Left cardiac atrium (tissue), 4 donors: ENCODE measurements at regions of chr4 and their contacts with region 1.

Region 1: DNA sequence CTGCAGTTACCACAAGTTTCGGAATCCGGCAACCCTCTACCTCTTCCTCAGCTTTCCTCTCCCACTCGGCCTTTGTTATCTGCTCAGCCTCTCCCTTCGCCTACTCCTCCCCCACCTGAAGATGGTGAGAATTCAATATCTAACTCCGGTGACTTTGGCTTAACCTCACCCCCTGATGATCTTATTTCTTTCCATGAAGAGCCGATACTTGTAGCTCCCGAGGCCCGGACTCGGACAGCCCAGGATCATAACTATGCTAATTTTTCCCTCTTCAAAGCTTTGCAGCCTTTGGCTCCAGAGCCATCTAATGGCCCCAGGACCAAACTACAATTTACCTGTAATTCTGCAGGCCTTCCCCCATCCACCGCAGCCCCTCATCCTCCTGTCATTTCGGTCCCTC is 32.0 kb upstream of the MGST2 start:
- DNase-seq: no peak
- ATAC-seq: peak; percentile 90

Region 2: GRCh38 chr4:139416073-139416673 is 217.5 kb before region 1 on chr4:
- intact Hi-C with region 1: loop called in 1 of 2 experiments (anchors 10 kb)
- DNase-seq: no peak
- ATAC-seq: no peak

Region 3: DNA sequence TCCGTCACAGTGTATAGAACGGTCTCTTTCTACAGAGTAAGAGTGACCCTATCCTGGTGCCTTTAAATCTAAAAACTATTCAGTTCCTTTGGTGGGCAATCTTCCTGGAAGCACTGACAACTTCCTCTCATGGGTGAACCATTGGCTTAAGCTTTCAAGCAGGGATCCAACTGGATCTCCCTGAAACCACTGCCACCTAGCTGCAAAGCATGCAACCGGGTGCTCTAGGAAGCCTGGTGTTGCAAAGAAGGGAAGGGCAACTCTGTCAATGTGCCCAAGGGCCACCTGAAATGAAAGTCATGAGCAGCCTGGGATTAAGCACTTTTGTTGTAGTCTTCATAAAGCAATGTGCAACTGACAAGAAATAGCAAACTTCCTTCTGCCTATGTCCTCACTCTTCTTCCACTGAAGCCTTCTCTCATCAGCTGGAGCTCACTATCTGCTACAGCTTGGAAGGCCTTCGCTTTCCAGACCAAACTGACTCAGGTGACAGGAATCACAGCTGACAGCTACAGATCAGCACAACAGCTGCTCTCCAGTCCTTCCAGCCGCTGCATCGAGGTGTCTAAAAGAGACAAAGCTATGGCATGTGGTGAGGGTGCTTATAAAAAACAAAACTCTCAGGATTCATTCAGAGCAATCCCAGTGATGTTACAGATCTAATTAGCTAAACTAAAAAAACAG is 123.8 kb before region 1 on chr4:
- intact Hi-C with region 1: loop called in 1 of 2 experiments (anchors 10 kb)
- DNase-seq: no peak
- ATAC-seq: peak; percentile 64 to 66

Region 4: GRCh38 chr4:139593091-139593564 is 40.5 kb before region 1 on chr4:
- intact Hi-C with region 1: no loop called
- DNase-seq: no peak
- ATAC-seq: peak in 1 of 2 donors; percentile 45

Region 5: DNA sequence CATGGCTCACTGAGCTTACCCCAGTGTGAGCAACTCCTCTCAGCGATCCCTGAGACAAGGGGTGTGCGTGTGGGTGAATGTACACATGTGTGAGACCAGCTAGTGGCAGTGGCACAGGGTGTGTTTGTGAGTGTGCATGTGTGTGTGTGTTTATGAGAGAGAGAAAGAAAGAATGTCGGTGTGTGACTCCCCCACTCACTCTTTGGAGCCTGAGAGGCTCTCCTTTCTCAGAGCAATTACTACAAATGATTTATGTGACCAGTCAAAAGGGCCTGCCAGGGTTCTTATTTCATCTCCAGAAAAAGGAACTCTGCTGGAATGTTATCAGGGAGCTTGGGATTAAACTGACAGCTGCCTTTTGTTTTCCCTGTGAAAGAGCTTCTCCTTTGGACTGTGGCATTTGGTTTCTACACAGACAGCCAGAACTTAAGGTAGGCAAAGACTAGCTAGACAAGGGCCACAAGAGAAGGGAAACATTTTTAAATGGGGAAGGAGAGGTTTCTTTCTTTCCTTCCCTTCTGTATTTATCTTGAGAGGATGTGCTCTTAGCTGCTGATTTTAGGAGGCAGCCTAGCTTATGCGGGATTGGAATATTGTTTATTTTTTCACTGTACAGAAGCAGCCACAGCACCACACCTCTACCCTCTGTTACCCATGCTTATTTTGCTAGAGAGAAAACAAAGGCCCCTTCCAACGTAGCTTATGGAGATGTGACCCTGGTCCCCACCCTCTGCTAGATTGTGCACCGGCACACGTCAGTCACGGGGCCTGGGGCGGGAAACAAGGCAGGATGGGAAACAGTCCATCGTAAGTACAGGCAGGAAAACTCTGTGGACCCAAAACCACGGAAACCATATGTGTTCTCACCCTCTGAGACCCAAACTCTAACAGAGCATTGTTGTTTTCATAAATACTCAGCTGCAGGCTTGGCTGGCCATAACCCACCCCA is 175.4 kb after region 1 on chr4:
- intact Hi-C with region 1: no loop called
- DNase-seq: no peak
- ATAC-seq: peak; percentile 32 to 34

Region 6: DNA sequence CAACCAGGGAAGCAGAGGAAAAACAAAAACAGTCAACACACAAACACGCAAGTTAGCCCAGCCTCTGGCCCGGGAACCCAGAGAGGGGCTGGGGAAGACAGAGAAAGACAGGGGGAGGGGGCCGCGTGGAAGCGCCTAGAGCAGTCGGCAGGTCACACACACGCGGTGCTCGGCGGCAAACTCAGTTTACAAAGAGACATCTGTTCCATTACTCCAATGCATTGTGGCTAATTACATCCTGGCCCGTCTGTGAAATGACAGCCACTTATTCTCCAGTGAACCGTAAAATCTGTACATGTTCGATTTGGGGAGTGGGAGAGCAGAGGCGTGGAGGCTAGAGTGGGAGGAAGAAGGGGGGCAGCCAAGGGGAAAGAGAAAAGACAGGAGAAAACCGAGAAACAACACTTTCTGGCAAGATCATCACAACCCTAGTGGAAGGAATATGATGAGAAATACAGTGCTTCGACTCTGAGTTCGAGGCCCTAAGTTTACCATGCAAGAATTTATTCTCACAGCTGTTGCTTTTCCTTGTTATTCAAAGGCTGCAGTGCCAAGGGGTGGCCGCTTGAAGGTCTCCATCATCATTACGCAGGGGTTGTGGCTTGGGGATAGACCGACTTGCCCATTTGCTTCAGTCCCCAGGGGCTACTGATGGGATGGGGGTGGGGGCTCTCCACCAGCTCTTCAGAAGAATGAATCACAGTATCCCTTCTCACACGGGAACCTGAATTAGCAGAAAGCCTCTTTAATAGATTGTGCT is 199.7 kb after region 1 on chr4:
- intact Hi-C with region 1: no loop called
- DNase-seq: no peak
- ATAC-seq: no peak